CD4-positive, alpha-beta memory T cell (primary cell): ENCODE measurements at regions of chr1 and their contacts with region 1.

Region 1: GRCh38 chr1:161098210-161099068 is at the start of gene KLHDC9:
- DNase-seq: peak; percentile 63 to 81 (median 69)
- H3K4me3 ChIP-seq: peak within 1 kb of the TSS; percentile 54 to 72
- H3K4me3 Mint-ChIP-seq: peak within 1 kb of the TSS; percentile 81 to 94 (median 88)
- H3K27ac ChIP-seq: peak within 1 kb of the TSS; percentile 55
- H3K27ac Mint-ChIP-seq: peak within 1 kb of the TSS; percentile 75 to 100 (median 98)
- H3K4me1 ChIP-seq: peaks cover 22% of the 10 kb centered on the region
- H3K4me1 Mint-ChIP-seq: peaks cover 12 to 27% (median 20%) of the 10 kb centered on the region in 4 donors
- H3K27me3 ChIP-seq: no peaks in the 10 kb centered on the region
- H3K27me3 Mint-ChIP-seq: peaks cover 0 to 2% of the 10 kb centered on the region in 2 donors
- total RNA-seq, gene KLHDC9: 0.52 to 0.53 TPM

Region 2: GRCh38 chr1:160494620-160495019 is 603.8 kb before region 1 on chr1:
- CTCF ChIA-PET with region 1: no interaction called
- POLR2A ChIA-PET with region 1: no interaction called
- intact Hi-C with region 1: no loop called
- DNase-seq: no peak
- H3K4me3 ChIP-seq: no peak overlapping the region
- H3K4me3 Mint-ChIP-seq: no peak overlapping the region
- H3K27ac ChIP-seq: no peak overlapping the region
- H3K27ac Mint-ChIP-seq: peak overlapping the region in 4 of 7 donors; percentile 6 to 16 (median 10)
- H3K4me1 ChIP-seq: peaks cover 7% of the 10 kb centered on the region
- H3K4me1 Mint-ChIP-seq: peaks cover 9 to 35% (median 27%) of the 10 kb centered on the region in 4 donors
- H3K27me3 ChIP-seq: no peaks in the 10 kb centered on the region
- H3K27me3 Mint-ChIP-seq: no peaks in the 10 kb centered on the region

Region 3: DNA sequence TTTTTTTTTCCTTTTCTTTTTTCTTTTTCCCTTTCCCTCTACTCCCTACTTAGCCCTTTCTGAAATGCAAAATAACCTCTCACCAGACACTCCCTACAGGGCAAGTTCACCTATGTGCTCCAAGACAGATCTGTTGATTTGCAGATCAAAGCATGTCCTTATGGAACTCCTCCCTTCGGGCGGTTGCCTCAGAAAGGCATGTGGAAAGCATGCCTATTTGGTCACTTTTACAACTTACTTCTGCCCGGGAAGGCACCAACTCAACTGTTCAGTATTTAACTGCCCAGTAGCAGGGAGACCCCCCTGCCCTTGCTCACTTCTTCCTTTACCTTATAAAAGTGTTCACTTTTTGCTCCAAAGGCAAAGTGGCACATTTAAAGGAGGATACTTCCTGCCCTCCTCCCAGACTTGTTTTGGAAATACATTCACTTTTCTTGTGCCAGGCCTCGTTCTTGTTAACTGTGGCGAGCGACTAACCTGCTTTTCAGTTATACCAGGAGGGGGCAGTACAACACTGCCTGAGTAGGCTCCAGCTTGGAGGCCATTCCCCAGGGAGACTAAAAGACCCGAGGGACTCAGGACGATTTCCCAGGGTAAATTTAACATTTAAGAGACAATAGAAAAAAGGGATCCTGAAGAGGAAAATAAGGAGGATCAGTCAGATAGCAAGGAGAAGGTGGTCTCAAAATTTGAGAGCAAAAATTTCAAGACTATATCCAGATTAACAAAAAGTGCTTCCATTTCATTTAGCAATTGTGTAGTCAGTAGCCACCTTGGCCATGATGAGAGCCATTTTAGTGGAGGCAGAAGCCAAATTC is 371.7 kb before region 1 on chr1:
- CTCF ChIA-PET with region 1: no interaction called
- POLR2A ChIA-PET with region 1: no interaction called
- intact Hi-C with region 1: loop called (anchors 5 kb)
- DNase-seq: peak; percentile 67 to 76 (median 74)
- H3K4me3 ChIP-seq: no peak overlapping the region
- H3K4me3 Mint-ChIP-seq: no peak overlapping the region
- H3K27ac ChIP-seq: no peak overlapping the region
- H3K27ac Mint-ChIP-seq: no peak overlapping the region
- H3K4me1 ChIP-seq: peaks cover 24% of the 10 kb centered on the region
- H3K4me1 Mint-ChIP-seq: peaks cover 11 to 20% (median 15%) of the 10 kb centered on the region in 4 donors
- H3K27me3 ChIP-seq: no peaks in the 10 kb centered on the region
- H3K27me3 Mint-ChIP-seq: no peaks in the 10 kb centered on the region

Region 4: GRCh38 chr1:160997323-160998038 is 101.0 kb before region 1 on chr1:
- CTCF ChIA-PET with region 1: interaction called, 175 read pairs
- POLR2A ChIA-PET with region 1: interaction called, 37 read pairs
- intact Hi-C with region 1: loop called (anchors 1 kb)
- DNase-seq: peak in 4 of 5 donors; percentile 30 to 42 (median 38)
- H3K4me3 ChIP-seq: no peak overlapping the region
- H3K4me3 Mint-ChIP-seq: no peak overlapping the region
- H3K27ac ChIP-seq: no peak overlapping the region
- H3K27ac Mint-ChIP-seq: peak overlapping the region; percentile 22 to 93 (median 84)
- H3K4me1 ChIP-seq: peaks cover 8% of the 10 kb centered on the region
- H3K4me1 Mint-ChIP-seq: peaks cover 4 to 8% (median 5%) of the 10 kb centered on the region in 4 donors
- H3K27me3 ChIP-seq: no peaks in the 10 kb centered on the region
- H3K27me3 Mint-ChIP-seq: no peaks in the 10 kb centered on the region

Region 5: DNA sequence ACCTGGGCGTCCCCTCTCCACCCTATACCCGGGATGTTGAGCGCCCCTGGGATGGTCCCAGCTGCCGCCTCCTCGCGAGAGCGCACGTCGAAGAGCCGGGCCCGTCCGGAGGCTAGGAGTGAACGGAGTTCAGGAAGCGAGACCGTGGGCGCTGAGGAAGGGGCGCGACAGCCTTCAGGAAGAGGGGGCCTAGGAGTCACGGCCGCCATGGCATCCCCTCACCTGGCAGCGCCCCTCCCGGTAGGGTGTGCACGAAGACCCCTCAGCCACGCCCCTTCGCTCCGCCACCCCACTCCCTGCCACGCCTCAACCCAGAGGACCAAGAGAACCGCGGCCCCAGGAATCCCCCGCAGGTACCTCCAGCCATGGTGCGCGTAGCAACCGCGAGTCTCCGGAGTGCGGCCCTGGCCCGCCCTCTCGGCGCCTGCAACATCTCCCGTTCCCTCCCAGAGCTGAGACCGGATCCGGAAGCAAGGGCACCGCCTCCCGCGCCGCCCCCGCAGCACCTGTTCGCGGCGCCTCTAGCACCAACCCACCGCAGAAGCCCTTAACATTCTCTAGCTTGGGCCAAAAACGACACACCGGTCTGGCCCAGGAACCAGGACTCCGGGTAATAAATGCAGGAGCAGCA is 59.8 kb before region 1 on chr1 and contains the start of gene TSTD1:
- CTCF ChIA-PET with region 1: interaction called, 104 read pairs
- POLR2A ChIA-PET with region 1: interaction called, 128 read pairs
- intact Hi-C with region 1: loop called (anchors 1 kb)
- DNase-seq: peak; percentile 88 to 95 (median 89)
- H3K4me3 ChIP-seq: peak within 1 kb of the TSS; percentile 65 to 96
- H3K4me3 Mint-ChIP-seq: peak within 1 kb of the TSS; percentile 87 to 95 (median 91)
- H3K27ac ChIP-seq: peak within 1 kb of the TSS; percentile 83
- H3K27ac Mint-ChIP-seq: peak within 1 kb of the TSS; percentile 89 to 99 (median 97)
- H3K4me1 ChIP-seq: peaks cover 47% of the 10 kb centered on the region
- H3K4me1 Mint-ChIP-seq: peaks cover 25 to 56% (median 38%) of the 10 kb centered on the region in 4 donors
- H3K27me3 ChIP-seq: no peaks in the 10 kb centered on the region
- H3K27me3 Mint-ChIP-seq: no peaks in the 10 kb centered on the region
- total RNA-seq, gene TSTD1: 92.0 to 93.1 TPM

Region 6: DNA sequence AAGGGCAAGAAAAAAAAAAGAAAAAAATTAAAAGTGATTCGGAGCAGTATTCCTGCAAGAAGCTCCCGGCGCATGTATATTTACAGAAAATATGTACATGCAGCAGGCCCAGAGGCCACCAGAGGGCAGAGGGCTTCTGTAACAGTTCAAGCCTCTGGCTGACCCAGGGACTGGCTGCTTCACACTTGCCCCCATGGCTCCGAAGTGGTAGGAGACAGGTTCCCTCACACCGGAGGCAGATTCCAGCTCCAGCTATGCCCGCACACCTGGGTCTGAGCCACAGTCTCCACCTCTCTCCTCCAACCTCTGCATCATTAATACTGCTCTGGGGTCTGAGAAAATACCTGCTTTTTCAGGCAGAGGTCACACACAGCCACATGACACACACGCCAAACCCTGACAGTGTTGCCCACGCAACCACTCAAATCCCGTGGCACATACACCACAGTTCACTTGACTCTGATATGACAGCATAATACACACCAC is 26.5 kb before region 1 on chr1:
- CTCF ChIA-PET with region 1: interaction called, 159 read pairs
- POLR2A ChIA-PET with region 1: interaction called, 122 read pairs
- intact Hi-C with region 1: loop called (anchors 1 kb)
- DNase-seq: peak in 4 of 5 donors; percentile 35 to 39 (median 37)
- H3K4me3 ChIP-seq: no peak overlapping the region
- H3K4me3 Mint-ChIP-seq: peak overlapping the region in 1 of 8 donors; percentile 17
- H3K27ac ChIP-seq: no peak overlapping the region
- H3K27ac Mint-ChIP-seq: peak overlapping the region in 6 of 7 donors; percentile 68 to 92 (median 72)
- H3K4me1 ChIP-seq: peaks cover 30% of the 10 kb centered on the region
- H3K4me1 Mint-ChIP-seq: peaks cover 24 to 56% (median 33%) of the 10 kb centered on the region in 4 donors
- H3K27me3 ChIP-seq: no peaks in the 10 kb centered on the region
- H3K27me3 Mint-ChIP-seq: no peaks in the 10 kb centered on the region

Region 7: DNA sequence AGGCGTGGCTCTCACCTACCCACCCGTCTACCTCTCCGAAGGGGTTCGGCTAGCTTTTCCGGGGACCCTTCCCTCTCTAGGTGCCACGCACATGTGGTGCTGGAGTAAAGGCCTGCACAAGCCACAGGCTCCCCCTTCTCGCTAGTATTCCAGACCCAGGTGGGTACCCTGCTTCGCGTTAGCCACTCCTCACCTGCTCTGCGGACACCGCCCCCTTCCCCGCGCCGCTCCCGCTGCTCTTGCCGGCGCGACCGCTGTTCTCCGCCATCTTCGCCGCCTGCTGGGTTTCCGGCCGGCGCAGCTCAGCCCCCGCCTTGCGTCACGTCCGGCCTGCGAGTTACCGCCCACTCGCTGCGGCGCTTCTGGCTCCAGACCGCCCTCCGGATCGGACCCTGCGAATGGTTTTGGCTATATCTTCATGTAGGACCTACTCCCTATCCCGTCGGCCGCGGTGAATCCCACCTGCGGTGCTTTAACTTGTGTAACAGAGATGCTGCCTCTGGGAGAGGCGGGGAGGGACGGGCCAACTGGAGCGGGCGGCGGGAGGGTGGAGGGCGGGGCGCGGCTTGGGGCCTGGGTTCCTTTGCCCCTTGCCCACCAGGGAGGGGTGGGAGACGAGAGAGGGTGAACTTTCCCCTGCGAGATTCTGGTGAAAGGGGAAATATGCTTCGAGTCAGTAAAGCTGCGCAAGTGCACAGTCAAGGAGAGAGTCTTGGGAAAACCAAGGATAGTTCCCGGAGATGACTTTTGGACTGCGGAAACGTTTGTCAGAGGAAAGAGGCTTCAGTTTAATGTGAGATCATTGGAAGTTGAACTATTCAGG is 19.5 kb after region 1 on chr1 and contains the starts of genes NIT1 and PFDN2:
- CTCF ChIA-PET with region 1: interaction called, 7 read pairs
- POLR2A ChIA-PET with region 1: interaction called, 24 read pairs
- intact Hi-C with region 1: no loop called
- DNase-seq: peak; percentile 83 to 87 (median 86)
- H3K4me3 ChIP-seq: peak within 1 kb of the TSS; percentile 32 to 95
- H3K4me3 Mint-ChIP-seq: peak within 1 kb of the TSS; percentile 94 to 98 (median 96)
- H3K27ac ChIP-seq: peak within 1 kb of the TSS; percentile 94
- H3K27ac Mint-ChIP-seq: peak within 1 kb of the TSS; percentile 94 to 99 (median 98)
- H3K4me1 ChIP-seq: peaks cover 64% of the 10 kb centered on the region
- H3K4me1 Mint-ChIP-seq: peaks cover 36 to 79% (median 61%) of the 10 kb centered on the region in 4 donors
- H3K27me3 ChIP-seq: no peaks in the 10 kb centered on the region
- H3K27me3 Mint-ChIP-seq: no peaks in the 10 kb centered on the region
- total RNA-seq, gene NIT1: 49.0 to 50.5 TPM
- total RNA-seq, gene PFDN2: 40.8 to 41.0 TPM

Region 8: DNA sequence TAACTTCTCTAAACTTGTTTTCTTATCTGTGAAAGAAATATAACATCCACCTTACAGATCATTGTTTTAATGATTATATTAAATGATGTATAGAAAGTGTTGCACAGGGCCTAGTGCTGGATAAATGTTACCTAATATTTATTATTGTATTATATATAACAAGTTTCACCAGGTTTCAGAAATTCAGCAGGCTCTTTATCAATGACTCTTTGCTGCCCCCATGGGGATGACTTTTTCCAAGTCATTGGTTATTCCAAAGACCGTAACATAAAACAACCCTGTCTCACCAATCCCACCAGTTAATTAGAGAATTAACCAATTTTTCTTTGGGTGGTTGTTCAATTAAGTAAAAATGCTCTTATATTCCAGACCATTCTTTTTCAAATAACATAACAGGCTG is 41.3 kb after region 1 on chr1:
- CTCF ChIA-PET with region 1: interaction called, 22 read pairs
- POLR2A ChIA-PET with region 1: no interaction called
- intact Hi-C with region 1: no loop called
- DNase-seq: peak; percentile 41 to 54 (median 51)
- H3K4me3 ChIP-seq: no peak overlapping the region
- H3K4me3 Mint-ChIP-seq: no peak overlapping the region
- H3K27ac ChIP-seq: no peak overlapping the region
- H3K27ac Mint-ChIP-seq: no peak overlapping the region
- H3K4me1 ChIP-seq: no peaks in the 10 kb centered on the region
- H3K4me1 Mint-ChIP-seq: peaks cover 0 to 4% (median 2%) of the 10 kb centered on the region in 4 donors
- H3K27me3 ChIP-seq: no peaks in the 10 kb centered on the region
- H3K27me3 Mint-ChIP-seq: no peaks in the 10 kb centered on the region

Region 9: GRCh38 chr1:161225534-161226319 is 127.3 kb after region 1 on chr1 and contains the start of gene TOMM40L:
- CTCF ChIA-PET with region 1: no interaction called
- POLR2A ChIA-PET with region 1: no interaction called
- intact Hi-C with region 1: no loop called
- DNase-seq: peak; percentile 85 to 97 (median 95)
- H3K4me3 ChIP-seq: peak within 1 kb of the TSS; percentile 67 to 91
- H3K4me3 Mint-ChIP-seq: peak within 1 kb of the TSS; percentile 96 to 100 (median 98)
- H3K27ac ChIP-seq: peak within 1 kb of the TSS; percentile 63
- H3K27ac Mint-ChIP-seq: peak within 1 kb of the TSS; percentile 89 to 98 (median 97)
- H3K4me1 ChIP-seq: peaks cover 28% of the 10 kb centered on the region
- H3K4me1 Mint-ChIP-seq: peaks cover 20 to 37% (median 29%) of the 10 kb centered on the region in 4 donors
- H3K27me3 ChIP-seq: no peaks in the 10 kb centered on the region
- H3K27me3 Mint-ChIP-seq: no peaks in the 10 kb centered on the region
- total RNA-seq, gene TOMM40L: 8.2 to 8.8 TPM